ENCODE measurements at regions of chr1 and their contacts with region 1.

Region 1: GRCh38 chr1:233364695-233365539 is 37.4 kb downstream of the MAP3K21 start:
- DNase-seq: peak in 1 of 2 experiments; percentile 15
- H3K4me3 ChIP-seq: no peak overlapping the region
- H3K4me3 Mint-ChIP-seq: no peak overlapping the region
- H3K27ac Mint-ChIP-seq: no peak overlapping the region
- H3K4me1 ChIP-seq: peaks cover 29% of the 10 kb centered on the region
- H3K4me1 Mint-ChIP-seq: peaks cover 38% of the 10 kb centered on the region
- H3K27me3 ChIP-seq: no peaks in the 10 kb centered on the region
- H3K27me3 Mint-ChIP-seq: no peaks in the 10 kb centered on the region
- CTCF ChIP-seq: peak; percentile 56 to 72

Region 2: GRCh38 chr1:233304489-233305102 is 60.3 kb before region 1 on chr1:
- CTCF ChIA-PET with region 1: no interaction called
- POLR2A ChIA-PET with region 1: no interaction called
- intact Hi-C with region 1: loop called (anchors 5 kb)
- DNase-seq: peak in 1 of 2 experiments; percentile 18
- H3K4me3 ChIP-seq: no peak overlapping the region
- H3K4me3 Mint-ChIP-seq: no peak overlapping the region
- H3K27ac Mint-ChIP-seq: no peak overlapping the region
- H3K4me1 ChIP-seq: no peaks in the 10 kb centered on the region
- H3K4me1 Mint-ChIP-seq: no peaks in the 10 kb centered on the region
- H3K27me3 ChIP-seq: no peaks in the 10 kb centered on the region; the same call in 1 of the 2 replicates
- H3K27me3 Mint-ChIP-seq: no peaks in the 10 kb centered on the region
- CTCF ChIP-seq: peak; percentile 71 to 75

Region 3: DNA sequence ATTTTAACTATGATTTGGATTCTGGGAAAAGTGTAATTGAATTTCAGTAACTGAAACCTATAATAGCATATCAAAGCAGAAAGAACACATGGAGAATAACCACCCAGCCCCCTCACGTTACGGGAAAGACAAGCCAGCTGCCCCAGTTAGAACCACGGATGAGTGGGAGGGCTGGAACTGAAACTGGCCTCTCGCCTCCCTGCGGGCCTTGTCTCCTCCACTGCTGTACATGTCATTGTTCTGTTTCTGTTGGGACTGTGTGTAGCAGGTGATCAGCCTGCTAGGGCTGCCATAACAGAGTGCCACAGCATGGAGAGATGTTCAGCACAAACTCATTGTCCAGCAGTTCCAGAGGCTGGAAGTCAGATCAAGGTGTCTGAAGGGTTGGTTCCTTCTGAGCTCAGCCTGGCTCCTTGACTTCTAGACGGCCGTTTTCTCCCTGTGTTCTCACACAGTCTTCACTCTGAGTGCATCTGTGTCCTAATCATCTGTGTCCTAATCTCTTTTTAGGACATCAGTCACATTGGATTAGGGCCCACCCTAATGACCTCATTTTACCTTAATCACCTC is 15.0 kb after region 1 on chr1:
- CTCF ChIA-PET with region 1: no interaction called
- POLR2A ChIA-PET with region 1: no interaction called
- intact Hi-C with region 1: no loop called
- DNase-seq: no peak
- H3K4me3 ChIP-seq: no peak overlapping the region
- H3K4me3 Mint-ChIP-seq: no peak overlapping the region
- H3K27ac Mint-ChIP-seq: no peak overlapping the region
- H3K4me1 ChIP-seq: no peaks in the 10 kb centered on the region
- H3K4me1 Mint-ChIP-seq: no peaks in the 10 kb centered on the region
- H3K27me3 ChIP-seq: no peaks in the 10 kb centered on the region
- H3K27me3 Mint-ChIP-seq: no peaks in the 10 kb centered on the region
- CTCF ChIP-seq: no peak

Region 4: GRCh38 chr1:233403814-233404213 is 38.9 kb after region 1 on chr1:
- CTCF ChIA-PET with region 1: no interaction called
- POLR2A ChIA-PET with region 1: no interaction called
- intact Hi-C with region 1: loop called (anchors 1 kb)
- DNase-seq: no peak
- H3K4me3 ChIP-seq: no peak overlapping the region
- H3K4me3 Mint-ChIP-seq: no peak overlapping the region
- H3K27ac Mint-ChIP-seq: no peak overlapping the region
- H3K4me1 ChIP-seq: no peaks in the 10 kb centered on the region
- H3K4me1 Mint-ChIP-seq: no peaks in the 10 kb centered on the region
- H3K27me3 ChIP-seq: no peaks in the 10 kb centered on the region
- H3K27me3 Mint-ChIP-seq: peaks cover 9% of the 10 kb centered on the region
- CTCF ChIP-seq: no peak

Region 5: GRCh38 chr1:233790662-233791375 is 425.9 kb after region 1 on chr1:
- CTCF ChIA-PET with region 1: interaction called, 3 read pairs
- POLR2A ChIA-PET with region 1: no interaction called
- intact Hi-C with region 1: loop called (anchors 1 kb)
- DNase-seq: peak in 1 of 2 experiments; percentile 43
- H3K4me3 ChIP-seq: no peak overlapping the region
- H3K4me3 Mint-ChIP-seq: no peak overlapping the region
- H3K27ac Mint-ChIP-seq: no peak overlapping the region
- H3K4me1 ChIP-seq: no peaks in the 10 kb centered on the region
- H3K4me1 Mint-ChIP-seq: no peaks in the 10 kb centered on the region
- H3K27me3 ChIP-seq: no peaks in the 10 kb centered on the region
- H3K27me3 Mint-ChIP-seq: no peaks in the 10 kb centered on the region
- CTCF ChIP-seq: peak; percentile 67 to 96

Region 6: DNA sequence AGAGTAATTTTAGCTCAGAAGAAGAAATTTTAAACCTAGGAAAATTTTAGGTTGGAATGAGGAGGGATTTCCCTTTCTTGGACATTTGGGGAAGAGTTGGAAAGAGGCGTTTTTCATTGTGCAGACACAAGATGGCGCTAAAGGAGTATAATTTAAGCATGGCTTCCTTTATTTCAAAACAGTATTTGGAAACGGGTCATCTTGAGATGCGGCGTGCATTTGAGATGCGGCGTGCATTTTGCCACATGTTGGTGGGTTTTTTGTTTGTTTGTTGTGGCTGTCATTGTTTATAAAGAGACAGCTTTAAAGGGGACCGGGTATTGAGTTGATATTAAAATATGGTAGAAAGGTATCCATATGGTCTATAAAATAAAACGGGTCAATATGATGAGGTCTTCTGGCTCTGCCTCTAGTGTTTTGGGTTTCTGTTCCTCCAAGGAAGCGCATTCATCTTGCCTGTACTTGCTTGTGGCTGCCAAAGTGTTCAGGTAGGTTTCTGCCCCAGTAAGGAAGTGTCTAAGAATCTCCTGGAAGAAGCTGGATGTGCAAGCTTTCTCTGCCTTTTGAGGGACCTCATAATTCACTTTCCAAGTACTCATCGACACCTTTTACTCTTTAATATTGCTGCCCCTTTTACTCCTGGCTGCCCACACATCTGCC is 749.9 kb after region 1 on chr1:
- CTCF ChIA-PET with region 1: interaction called, 4 read pairs
- POLR2A ChIA-PET with region 1: no interaction called
- intact Hi-C with region 1: loop called (anchors 1 kb)
- DNase-seq: peak in 1 of 2 experiments; percentile 45
- H3K4me3 ChIP-seq: no peak overlapping the region
- H3K4me3 Mint-ChIP-seq: no peak overlapping the region
- H3K27ac Mint-ChIP-seq: no peak overlapping the region
- H3K4me1 ChIP-seq: no peaks in the 10 kb centered on the region
- H3K4me1 Mint-ChIP-seq: no peaks in the 10 kb centered on the region
- H3K27me3 ChIP-seq: no peaks in the 10 kb centered on the region; the same call in none of the 2 replicates
- H3K27me3 Mint-ChIP-seq: peaks cover 12% of the 10 kb centered on the region
- CTCF ChIP-seq: peak; percentile 60 to 66

Measured in Caco-2 (cell line).